Right cardiac atrium (tissue), 5 donors: ENCODE measurements at regions of chr4 and their contacts with region 1.

Region 1: DNA sequence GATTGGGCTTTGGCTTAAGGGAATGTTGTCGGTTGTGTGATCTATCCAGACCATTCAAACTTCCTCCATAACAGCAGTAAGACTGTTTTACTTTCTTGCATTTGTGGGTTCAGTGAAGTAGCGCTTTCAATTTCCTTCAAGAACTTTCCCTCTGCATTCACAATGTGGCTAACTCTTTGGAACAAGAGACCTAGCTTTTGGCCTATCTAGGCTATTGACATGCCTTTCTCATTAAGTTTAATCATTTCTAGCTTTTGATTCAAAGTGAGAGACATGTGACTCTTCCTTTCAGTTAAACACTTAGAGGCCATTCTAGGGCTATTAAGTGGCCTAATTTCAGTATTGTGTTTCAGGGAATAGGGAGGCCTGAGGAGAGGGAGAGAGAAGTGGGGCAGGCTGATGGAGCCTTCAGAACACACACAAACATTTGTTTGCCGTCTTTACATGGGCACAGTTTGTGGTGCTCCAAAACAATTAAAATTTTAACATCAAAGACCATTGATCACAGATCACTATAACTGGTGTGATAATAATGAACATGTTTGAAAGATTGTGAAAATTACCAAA is 34.1 kb downstream of the ADH5 start:
- DNase-seq: no peak
- ATAC-seq: no peak
- H3K4me3 ChIP-seq: no peak overlapping the region
- H3K27ac ChIP-seq: no peak overlapping the region
- H3K4me1 ChIP-seq: no peaks in the 10 kb centered on the region
- H3K27me3 ChIP-seq: no peaks in the 10 kb centered on the region

Region 2: DNA sequence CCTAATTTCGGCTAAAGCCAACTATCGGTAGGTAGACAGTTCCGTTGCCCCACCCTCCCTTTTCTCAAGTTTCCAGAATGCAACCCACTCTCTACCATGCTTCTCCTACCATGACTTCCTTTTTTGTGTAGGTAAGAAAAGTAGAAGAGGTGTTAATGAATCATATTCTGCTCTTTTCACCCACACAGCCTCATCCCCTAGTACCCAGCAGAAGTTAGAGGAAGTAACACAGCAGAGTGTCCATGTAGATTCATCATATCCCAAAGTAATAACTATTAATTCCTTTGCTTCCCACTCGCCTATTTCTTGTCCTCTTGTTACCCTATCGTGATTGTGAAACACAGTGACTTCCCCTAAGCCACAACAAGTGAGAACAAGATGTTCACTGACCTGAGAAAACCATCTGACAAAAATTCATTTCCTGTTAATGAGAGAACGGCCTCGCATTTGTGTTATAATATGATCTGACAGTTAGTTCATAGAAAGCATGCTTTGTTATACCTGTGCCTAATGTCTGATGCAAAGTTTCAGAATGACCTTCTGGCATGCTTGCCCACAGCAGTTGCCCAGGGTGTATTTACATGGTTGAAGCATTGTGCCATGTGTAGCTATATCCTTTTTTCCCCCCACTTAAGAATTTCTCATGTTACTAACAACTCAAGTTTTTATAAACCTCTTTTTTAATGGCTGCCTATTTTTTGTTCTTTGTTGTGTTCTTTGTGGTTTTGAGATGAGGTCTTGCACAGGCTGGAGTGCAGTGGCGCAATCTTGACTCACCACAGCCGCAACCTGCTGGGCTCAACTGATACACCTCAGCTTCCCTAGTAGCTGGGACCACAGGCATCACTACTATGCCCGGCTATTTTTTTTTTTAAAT is 607.8 kb before region 1 on chr4:
- intact Hi-C with region 1: no loop called
- DNase-seq: peak in 1 of 3 donors; percentile 54
- ATAC-seq: peak in 1 of 2 donors; percentile 21
- H3K4me3 ChIP-seq: no peak overlapping the region
- H3K27ac ChIP-seq: no peak overlapping the region
- H3K4me1 ChIP-seq: no peaks in the 10 kb centered on the region
- H3K27me3 ChIP-seq: no peaks in the 10 kb centered on the region

Region 3: GRCh38 chr4:98929341-98930267 is 124.9 kb before region 1 on chr4:
- intact Hi-C with region 1: loop called in 1 of 4 experiments (anchors 10 kb)
- DNase-seq: peak; percentile 74 to 80 (median 80)
- ATAC-seq: peak; percentile 78 to 80
- H3K4me3 ChIP-seq: peak overlapping the region; percentile 79
- H3K27ac ChIP-seq: peak overlapping the region; percentile 98
- H3K4me1 ChIP-seq: no peaks in the 10 kb centered on the region
- H3K27me3 ChIP-seq: no peaks in the 10 kb centered on the region

Region 4: GRCh38 chr4:98995183-98996055 is 59.1 kb before region 1 on chr4 and contains the start of gene METAP1:
- intact Hi-C with region 1: loop called (anchors 5 to 10 kb)
- DNase-seq: peak; percentile 94 to 98 (median 97)
- ATAC-seq: peak; percentile 97
- H3K4me3 ChIP-seq: peak within 1 kb of the TSS; percentile 95
- H3K27ac ChIP-seq: peak within 1 kb of the TSS; percentile 93
- H3K4me1 ChIP-seq: no peaks in the 10 kb centered on the region
- H3K27me3 ChIP-seq: no peaks in the 10 kb centered on the region
- total RNA-seq, gene METAP1: 37.0 to 53.2 (median 40.8) TPM

Region 5: GRCh38 chr4:99002279-99002678 is 52.2 kb before region 1 on chr4:
- intact Hi-C with region 1: loop called (anchors 5 to 10 kb)
- DNase-seq: no peak
- ATAC-seq: no peak
- H3K4me3 ChIP-seq: no peak overlapping the region
- H3K27ac ChIP-seq: no peak overlapping the region
- H3K4me1 ChIP-seq: no peaks in the 10 kb centered on the region
- H3K27me3 ChIP-seq: no peaks in the 10 kb centered on the region